Posterior cingulate gyrus (tissue), 11 donors: ENCODE measurements at regions of chr3 and their contacts with region 1.

Region 1: DNA sequence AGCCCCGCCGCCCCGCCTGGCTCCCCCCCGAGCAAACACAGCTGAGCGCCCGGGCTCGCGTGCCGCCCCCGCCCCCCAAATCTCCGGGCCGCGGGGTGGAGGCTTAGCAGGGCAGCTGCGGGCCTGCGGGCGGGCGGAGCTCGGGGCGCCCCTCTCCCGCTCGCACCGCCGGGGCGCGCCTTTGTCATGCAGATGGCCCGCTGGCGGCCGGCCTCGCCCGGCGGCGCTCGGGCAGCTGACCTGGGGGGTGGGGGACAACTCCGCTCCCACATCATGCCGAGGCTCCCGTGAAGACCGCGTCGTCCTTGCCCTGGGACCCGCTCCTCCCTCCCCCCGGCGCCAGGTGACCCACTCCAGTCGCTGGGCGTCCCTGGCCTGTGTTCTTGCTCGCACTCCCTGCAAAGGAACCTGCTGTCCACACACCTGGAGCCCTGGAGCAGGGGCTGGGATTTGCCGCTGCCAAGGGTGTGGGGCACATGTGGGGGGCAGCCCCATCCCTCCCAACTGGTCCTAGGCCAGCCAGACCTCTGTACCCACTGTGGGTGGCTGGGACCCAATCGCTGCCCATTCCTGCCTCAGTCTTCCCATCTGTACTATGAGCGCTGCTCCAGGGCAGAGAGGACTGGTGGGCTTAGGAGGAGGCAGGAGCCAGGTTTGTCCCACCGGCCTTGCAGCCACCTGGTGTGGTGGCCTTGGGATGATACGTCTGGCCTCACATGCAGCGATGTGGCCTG is 33.6 kb downstream of the DNAJB8 start:
- DNase-seq: no peak

Region 2: DNA sequence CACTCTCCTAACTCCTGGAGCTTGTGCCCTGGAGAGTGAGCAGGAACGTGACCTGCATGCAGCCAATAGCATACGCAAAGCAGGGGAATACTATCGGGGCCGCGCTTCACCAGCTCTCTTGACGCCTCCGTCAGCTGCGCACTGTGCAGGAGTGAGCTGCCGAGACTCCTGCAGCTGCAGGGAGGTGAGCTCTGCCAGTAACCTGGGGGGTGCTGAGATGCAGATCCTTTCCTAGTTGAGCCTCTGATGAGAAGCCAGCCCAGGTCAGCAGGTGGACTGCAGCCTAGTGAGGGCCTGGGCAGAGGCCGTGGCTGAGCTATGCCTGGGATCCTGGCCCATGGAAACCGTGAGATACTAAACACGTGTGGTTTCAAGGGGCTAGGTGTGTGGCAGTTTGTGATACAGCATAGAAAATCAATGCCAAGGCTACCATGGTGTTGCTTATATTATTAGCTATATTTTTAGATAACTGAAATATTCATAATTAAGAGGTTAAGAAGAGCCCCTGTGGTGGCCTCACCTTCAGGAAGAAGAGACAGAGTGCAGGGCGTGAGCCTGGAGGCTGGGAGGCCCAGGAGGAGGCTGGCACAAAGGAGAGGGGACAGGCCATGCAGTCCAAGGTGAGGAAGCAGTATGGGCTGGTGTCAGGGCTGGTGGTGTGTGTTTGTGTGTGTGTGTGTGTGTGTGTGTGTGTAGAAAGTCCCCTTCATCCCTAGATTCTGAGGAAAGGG is 39.5 kb after region 1 on chr3:
- intact Hi-C with region 1: no loop called
- DNase-seq: no peak

Region 3: GRCh38 chr3:128482666-128483656 is 49.8 kb after region 1 on chr3:
- intact Hi-C with region 1: loop called (anchors 5 kb)
- DNase-seq: peak in 3 of 10 donors; percentile 33 to 56 (median 45)